ENCODE measurements at regions of chr7 and their contacts with region 1.

Region 1: DNA sequence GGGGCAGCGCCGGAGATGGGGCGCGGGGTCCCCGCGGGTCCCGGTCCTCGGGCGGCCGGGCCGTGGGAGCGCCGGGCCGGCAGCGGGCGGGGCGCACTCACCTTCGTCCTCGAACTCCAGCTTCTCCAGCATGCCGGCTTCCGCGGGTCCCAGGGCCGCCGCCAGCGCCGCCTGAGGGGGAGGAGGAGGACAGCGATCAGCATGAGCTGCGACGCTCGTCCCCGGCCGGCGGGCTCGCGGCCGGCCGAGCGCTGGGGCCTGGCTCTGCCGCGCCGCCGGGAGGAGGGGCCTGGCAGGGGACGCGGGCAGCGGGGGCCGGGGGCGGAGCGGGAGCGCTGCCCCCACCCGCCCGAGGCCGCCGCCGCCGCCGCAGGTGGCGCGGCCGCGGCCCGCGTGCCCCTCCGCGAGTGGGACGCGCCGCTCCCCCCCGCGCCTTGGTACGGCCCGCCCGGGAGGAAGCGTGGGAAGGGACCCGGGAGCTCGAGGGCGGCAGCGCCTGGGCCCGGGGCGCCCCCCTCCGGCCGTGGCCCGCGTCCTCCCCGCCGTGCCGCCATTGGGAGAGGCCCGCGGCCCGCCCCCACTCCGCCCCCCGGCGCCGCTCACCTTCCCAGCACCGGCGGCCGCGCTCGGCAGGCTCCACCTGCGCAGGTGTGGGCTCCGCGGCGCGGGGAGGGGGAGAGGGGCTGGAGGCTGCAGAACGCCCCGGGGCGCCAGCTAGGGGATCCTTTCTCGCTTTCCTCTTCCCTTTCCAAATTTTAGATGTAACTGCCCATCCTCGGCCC is 112.5 kb upstream of the RHEB start:
- DNase-seq: peak; percentile 97
- H3K4me3 Mint-ChIP-seq: peak overlapping the region; percentile 96
- H3K27ac Mint-ChIP-seq: peak overlapping the region; percentile 99
- H3K4me1 Mint-ChIP-seq: peaks cover 24% of the 10 kb centered on the region
- H3K27me3 Mint-ChIP-seq: peaks cover 2% of the 10 kb centered on the region

Region 2: GRCh38 chr7:151341357-151342101 is 290.6 kb before region 1 on chr7 and contains the start of gene NUB1:
- intact Hi-C with region 1: loop called (anchors 10 kb)
- DNase-seq: peak; percentile 98
- H3K4me3 Mint-ChIP-seq: peak within 1 kb of the TSS; percentile 85
- H3K27ac Mint-ChIP-seq: peak within 1 kb of the TSS; percentile 87
- H3K4me1 Mint-ChIP-seq: peaks cover 22% of the 10 kb centered on the region
- H3K27me3 Mint-ChIP-seq: no peaks in the 10 kb centered on the region
- total RNA-seq, gene NUB1: 36.5 and 40.4 TPM in 2 replicates

Region 3: GRCh38 chr7:151361193-151361959 is 270.8 kb before region 1 on chr7:
- intact Hi-C with region 1: no loop called
- DNase-seq: no peak
- H3K4me3 Mint-ChIP-seq: no peak overlapping the region
- H3K27ac Mint-ChIP-seq: no peak overlapping the region
- H3K4me1 Mint-ChIP-seq: no peaks in the 10 kb centered on the region
- H3K27me3 Mint-ChIP-seq: no peaks in the 10 kb centered on the region

Region 4: DNA sequence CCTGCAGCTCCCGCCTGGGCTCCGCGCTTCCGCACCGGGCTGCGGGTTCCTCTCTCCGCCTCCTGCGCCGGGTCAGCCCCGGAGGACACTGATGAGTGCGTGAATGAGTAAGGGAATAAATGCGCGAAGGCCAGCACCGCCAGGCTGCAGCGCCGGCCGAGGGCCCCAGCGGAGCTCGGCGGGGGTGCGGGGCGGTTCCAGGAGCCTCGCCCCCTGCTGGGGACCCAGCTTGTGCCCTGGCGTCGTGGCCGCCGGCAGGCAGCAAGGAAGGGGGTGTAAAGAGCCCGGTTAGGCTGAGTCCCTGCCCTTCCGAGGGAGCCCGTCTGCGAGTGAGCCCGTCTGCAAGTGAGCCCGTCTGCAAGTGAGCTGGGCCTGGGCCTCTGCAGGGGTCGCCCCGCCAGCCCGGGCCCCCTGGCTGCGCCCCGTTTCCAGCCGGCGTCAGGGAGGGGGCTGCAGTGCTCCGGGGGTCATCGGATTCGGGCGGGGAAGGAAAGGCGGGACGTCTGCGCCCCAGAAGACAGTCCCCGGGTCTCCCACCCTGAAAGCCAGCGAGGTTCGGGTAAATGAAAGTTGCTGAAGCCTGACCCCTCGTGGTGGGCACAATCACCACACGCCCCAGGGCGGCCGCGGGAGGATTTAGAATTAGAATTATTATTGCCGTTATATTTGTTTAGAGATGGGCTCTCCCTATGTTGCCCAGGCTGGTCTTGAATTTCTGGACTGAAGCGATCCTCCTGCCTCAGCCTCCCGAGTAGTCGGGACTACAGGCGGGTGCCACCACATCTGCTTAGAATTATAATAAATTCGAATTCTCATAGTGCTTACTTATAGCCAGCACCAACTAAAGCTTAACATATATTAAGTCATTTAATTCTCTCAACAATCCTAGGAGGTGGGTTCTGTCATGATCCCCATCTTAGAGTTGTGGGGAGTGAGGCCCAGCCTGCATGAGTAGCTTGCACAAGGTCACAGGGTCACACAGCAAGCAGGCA is 183.6 kb before region 1 on chr7:
- intact Hi-C with region 1: no loop called
- DNase-seq: peak; percentile 93
- H3K4me3 Mint-ChIP-seq: peak overlapping the region; percentile 65
- H3K27ac Mint-ChIP-seq: no peak overlapping the region
- H3K4me1 Mint-ChIP-seq: peaks cover 4% of the 10 kb centered on the region
- H3K27me3 Mint-ChIP-seq: peaks cover 18% of the 10 kb centered on the region

Region 5: GRCh38 chr7:151472644-151473380 is 159.3 kb before region 1 on chr7:
- intact Hi-C with region 1: loop called (anchors 10 kb)
- DNase-seq: peak; percentile 52
- H3K4me3 Mint-ChIP-seq: no peak overlapping the region
- H3K27ac Mint-ChIP-seq: no peak overlapping the region
- H3K4me1 Mint-ChIP-seq: peaks cover 39% of the 10 kb centered on the region
- H3K27me3 Mint-ChIP-seq: no peaks in the 10 kb centered on the region